ENCODE measurements at regions of chr22 and their contacts with region 1.

Region 1: DNA sequence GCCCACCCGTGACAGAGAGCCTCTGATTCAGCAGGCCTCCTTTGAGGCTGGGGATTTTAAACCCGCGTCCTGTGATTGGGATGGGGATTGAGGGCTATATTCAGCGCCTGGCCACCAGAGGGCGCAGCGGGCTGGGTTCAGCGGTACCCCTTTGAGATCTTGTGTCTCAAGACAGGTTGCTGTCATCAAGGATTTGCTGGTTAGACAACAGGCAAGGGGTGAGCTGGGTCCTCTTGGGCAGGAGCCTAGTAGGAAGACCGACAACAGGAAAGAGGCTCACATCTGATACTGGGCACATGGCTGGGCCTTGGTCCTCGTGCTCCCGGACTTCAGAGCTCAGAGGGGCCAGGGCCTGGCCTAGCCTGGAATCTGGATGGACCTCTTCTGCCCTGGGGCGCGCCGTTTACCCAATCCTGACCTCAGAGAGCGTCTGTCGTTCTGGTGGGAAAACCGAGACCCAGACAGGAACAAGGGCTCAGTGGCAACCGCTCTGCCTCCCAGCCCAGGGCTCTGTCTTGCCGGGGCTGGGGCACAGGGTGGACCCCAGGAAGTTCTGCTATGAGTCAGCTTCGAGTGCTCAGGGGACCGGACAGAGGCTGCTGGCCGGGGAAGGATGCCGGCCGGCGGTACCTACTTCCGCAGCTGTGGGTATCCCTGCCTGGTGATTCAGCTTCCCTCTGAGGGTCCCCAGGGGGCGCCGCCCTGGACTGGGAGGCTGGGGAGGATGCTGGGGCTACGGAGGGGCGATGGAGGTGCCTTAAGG is 929 bp upstream of the SLC35E4 start:
- DNase-seq: no peak
- H3K4me3 ChIP-seq: no peak overlapping the region
- H3K27me3 ChIP-seq: no peaks in the 10 kb centered on the region
- CTCF ChIP-seq: peak; percentile 95

Region 2: DNA sequence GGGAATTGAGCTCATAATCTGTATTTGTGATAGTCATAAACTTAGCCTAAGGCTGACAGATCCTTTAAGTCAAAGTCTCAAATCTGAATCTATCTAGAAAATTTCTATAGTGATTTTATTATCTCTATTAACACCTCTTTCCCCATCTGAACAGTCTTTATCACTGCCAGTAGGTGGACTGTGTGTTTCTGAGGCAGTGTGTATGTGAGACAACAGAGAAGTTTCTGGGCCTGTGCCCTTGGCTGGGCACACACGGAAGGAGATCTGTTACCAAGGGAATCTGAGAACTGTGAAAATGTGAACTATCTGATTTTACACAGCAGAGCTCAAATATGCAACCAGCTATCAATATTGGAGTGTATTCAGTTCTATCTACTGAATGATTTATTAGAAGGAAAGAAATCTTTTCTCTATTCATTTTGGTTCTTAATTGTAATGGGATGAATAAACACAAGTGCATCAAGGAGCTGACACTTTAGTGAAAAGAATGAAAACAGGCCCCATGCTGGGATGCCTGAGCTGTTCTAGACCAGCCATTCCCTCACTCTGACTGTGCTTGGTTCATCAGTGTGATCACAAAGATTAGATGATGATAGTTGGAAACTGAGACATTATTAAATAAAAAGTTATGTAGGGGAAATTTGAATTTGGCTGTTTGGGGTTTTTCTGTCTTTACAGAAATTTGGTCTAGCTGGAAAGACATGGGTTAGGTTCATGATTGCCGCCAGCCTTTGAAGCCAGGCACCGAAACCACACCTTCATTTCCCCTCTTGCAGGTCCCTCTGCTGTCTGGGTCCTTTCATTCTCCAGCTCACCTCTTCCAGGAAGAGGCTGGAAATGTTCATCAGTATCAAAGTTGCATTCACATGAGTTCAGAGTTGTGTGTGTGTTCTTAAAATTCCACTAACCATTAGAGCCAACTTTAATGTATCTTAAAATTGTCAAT is 456.2 kb before region 1 on chr22:
- CTCF ChIA-PET with region 1: no interaction called
- POLR2A ChIA-PET with region 1: no interaction called
- DNase-seq: no peak
- H3K4me3 ChIP-seq: no peak overlapping the region
- H3K27me3 ChIP-seq: no peaks in the 10 kb centered on the region; the same call in 1 of the 2 replicates
- CTCF ChIP-seq: no peak

Region 3: GRCh38 chr22:30485362-30485988 is 149.2 kb before region 1 on chr22:
- CTCF ChIA-PET with region 1: no interaction called
- POLR2A ChIA-PET with region 1: no interaction called
- DNase-seq: no peak
- H3K4me3 ChIP-seq: no peak overlapping the region
- H3K27me3 ChIP-seq: peaks cover 3% of the 10 kb centered on the region; the same call in 1 of the 2 replicates
- CTCF ChIP-seq: peak; percentile 97

Region 4: DNA sequence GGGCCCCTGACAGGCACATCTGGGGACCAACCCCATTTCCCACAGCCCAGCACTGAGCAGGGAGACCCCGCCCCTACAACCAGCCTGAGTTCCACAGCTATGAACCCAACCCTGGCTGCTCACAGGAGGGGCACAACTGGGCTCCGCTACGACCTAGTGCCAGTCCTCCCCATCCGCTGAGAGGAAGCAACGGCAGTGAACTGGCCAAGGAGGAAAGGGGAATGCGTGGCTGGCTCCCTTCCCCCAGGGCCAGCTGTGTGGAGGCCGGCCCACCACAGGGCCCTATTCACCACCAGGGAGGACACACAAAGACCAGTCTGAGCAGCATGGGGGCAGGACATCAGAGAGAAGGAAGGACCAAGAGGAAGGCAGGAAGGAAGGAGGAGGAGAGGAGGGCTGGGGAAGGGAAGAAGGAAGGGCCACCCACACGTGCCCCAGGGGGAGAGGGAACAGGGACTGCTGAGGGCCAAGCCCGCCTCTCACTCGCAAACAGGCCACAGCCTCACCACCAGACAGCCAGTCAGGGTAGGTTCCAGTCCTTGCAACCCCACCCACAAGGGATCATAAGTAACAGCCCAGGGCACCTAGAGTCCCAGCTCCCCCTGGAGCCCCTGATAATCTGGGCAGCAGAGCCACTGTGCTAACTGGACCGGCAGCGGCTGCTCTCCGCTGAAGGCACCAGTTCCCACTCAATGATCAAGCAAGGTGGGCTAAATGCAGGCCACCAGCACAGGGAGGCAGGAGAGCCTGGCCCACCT is 51.7 kb before region 1 on chr22:
- CTCF ChIA-PET with region 1: no interaction called
- POLR2A ChIA-PET with region 1: no interaction called
- DNase-seq: no peak
- H3K4me3 ChIP-seq: no peak overlapping the region
- H3K27me3 ChIP-seq: no peaks in the 10 kb centered on the region
- CTCF ChIP-seq: no peak

Region 5: GRCh38 chr22:30606455-30607299 is 28.0 kb before region 1 on chr22 and contains the start of gene TCN2:
- CTCF ChIA-PET with region 1: interaction called, 13 read pairs
- POLR2A ChIA-PET with region 1: no interaction called
- DNase-seq: no peak
- H3K4me3 ChIP-seq: peak within 1 kb of the TSS; percentile 39
- H3K27me3 ChIP-seq: no peaks in the 10 kb centered on the region
- CTCF ChIP-seq: no peak
- polyA plus RNA-seq, gene TCN2: 9.1 and 15.8 TPM in 2 replicates

Region 6: GRCh38 chr22:30649430-30650007 is 14.9 kb after region 1 on chr22:
- CTCF ChIA-PET with region 1: interaction called, 23 read pairs
- POLR2A ChIA-PET with region 1: no interaction called
- DNase-seq: no peak
- H3K4me3 ChIP-seq: no peak overlapping the region
- H3K27me3 ChIP-seq: no peaks in the 10 kb centered on the region
- CTCF ChIP-seq: no peak

Region 7: GRCh38 chr22:30705710-30706651 is 71.3 kb after region 1 on chr22:
- CTCF ChIA-PET with region 1: interaction called, 12 read pairs
- POLR2A ChIA-PET with region 1: no interaction called
- DNase-seq: peak; percentile 87
- H3K4me3 ChIP-seq: no peak overlapping the region
- H3K27me3 ChIP-seq: no peaks in the 10 kb centered on the region
- CTCF ChIP-seq: no peak

Region 8: DNA sequence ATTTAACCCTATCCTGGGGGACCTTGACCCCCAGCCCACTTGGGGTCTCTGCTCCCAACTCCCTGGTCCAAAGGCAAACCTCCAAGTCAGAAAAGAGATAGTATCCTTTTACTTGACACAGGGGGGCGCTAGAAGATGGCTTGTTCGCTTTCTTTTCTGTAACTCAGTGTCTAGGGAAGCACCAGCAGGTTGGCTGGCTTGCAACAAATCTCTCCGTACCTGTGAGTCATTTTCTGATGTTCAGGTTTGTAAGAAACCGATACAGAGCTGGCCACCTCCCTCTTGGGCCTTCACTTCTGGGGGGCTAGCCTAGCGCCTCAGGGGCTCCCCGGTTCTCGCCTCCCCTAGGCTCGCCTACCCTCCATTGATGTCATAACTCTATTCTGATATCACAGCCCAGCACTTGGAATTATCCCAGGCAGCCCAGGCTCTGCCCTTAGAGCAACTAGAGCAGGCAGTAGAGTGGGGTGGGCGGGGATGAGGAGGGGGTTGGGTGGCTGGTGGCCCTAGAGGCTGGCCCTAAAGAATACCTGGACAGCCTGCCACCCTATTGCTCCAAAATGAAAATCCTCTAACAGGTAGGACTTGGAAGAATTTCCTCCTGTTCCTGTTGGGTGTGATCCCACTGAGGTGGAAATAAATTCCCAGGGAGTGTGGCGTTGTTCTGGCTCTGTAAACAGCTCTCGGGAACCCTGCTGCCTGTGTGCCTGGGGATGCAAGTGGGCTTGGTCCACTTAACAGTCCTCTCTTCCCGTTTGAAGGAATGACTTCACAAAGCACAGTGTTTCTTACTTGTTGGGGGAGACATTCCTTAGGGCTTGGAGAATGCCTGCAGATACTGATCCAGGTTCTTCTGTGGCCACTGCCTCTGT is 129.4 kb after region 1 on chr22:
- CTCF ChIA-PET with region 1: interaction called, 282 read pairs
- POLR2A ChIA-PET with region 1: no interaction called
- DNase-seq: peak; percentile 18
- H3K4me3 ChIP-seq: no peak overlapping the region
- H3K27me3 ChIP-seq: no peaks in the 10 kb centered on the region
- CTCF ChIP-seq: peak; percentile 70

Measured in BJ (cell line).